ENCODE measurements at regions of chr7 and their contacts with region 1.

Region 1: DNA sequence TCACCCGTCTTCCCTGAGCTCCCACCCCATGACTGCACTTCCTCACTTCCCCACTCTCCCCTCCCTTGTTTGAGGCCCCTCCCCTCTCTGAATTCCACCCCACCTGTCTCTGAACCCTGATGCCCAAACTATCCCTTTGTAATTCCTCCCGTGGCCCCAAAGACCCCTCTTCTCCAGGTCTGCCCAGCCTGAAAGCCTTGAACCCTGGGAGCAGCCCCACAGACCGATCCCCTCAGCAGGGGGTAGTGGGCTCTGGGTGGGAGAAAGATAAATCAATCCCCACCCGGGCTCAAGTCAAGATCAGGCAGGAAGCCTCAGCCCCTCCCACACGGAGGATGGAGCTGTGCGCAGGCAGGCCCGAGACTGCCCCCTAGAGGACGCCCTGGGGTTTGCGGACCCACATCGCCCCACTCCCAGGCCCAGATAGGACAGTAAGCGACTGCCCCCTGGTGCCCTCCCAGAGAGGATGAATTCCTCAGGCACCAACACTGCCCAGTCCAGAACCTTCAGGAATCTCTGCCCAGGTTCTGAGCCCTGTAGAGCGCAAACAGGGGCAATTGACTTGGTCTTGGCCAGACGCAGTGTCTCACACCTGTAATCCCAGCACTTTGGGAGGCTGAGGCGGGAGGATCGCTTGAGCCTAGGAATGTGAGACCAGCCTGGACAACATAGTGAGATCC is 11.7 kb downstream of the HSPB1 start:
- DNase-seq: peak; percentile 90 to 97 (median 93)
- ATAC-seq: peak; percentile 85
- H3K4me3 ChIP-seq: no peak overlapping the region
- H3K4me3 Mint-ChIP-seq: peak overlapping the region in 4 of 10 donors; percentile 33 to 70 (median 60)
- H3K27ac ChIP-seq: no peak overlapping the region
- H3K27ac Mint-ChIP-seq: peak overlapping the region in 3 of 9 donors; percentile 8 to 86 (median 64)
- H3K4me1 ChIP-seq: peaks cover 11 to 12% of the 10 kb centered on the region in 2 donors
- H3K4me1 Mint-ChIP-seq: peaks cover 13 to 27% (median 23%) of the 10 kb centered on the region in 7 donors
- H3K27me3 ChIP-seq: no peaks in the 10 kb centered on the region
- H3K27me3 Mint-ChIP-seq: no peaks in the 10 kb centered on the region

Region 2: GRCh38 chr7:75866489-75867389 is 447.4 kb before region 1 on chr7:
- CTCF ChIA-PET with region 1: interaction called, 4 read pairs
- POLR2A ChIA-PET with region 1: no interaction called
- intact Hi-C with region 1: loop called (anchors 1 to 5 kb)
- DNase-seq: peak; percentile 17 to 62 (median 37)
- ATAC-seq: peak; percentile 89
- H3K4me3 ChIP-seq: no peak overlapping the region
- H3K4me3 Mint-ChIP-seq: no peak overlapping the region
- H3K27ac ChIP-seq: no peak overlapping the region
- H3K27ac Mint-ChIP-seq: no peak overlapping the region
- H3K4me1 ChIP-seq: no peaks in the 10 kb centered on the region
- H3K4me1 Mint-ChIP-seq: peaks cover 0 to 13% (median 0%) of the 10 kb centered on the region in 7 donors
- H3K27me3 ChIP-seq: no peaks in the 10 kb centered on the region
- H3K27me3 Mint-ChIP-seq: peaks cover 5 to 8% (median 7%) of the 10 kb centered on the region in 5 donors

Region 3: GRCh38 chr7:76166404-76167255 is 147.6 kb before region 1 on chr7:
- CTCF ChIA-PET with region 1: interaction called, 3 read pairs
- POLR2A ChIA-PET with region 1: interaction called, 10 read pairs
- intact Hi-C with region 1: no loop called
- DNase-seq: peak; percentile 90 to 95 (median 94)
- ATAC-seq: peak; percentile 96
- H3K4me3 ChIP-seq: peak overlapping the region; percentile 96
- H3K4me3 Mint-ChIP-seq: peak overlapping the region; percentile 84 to 92 (median 90)
- H3K27ac ChIP-seq: peak overlapping the region; percentile 84
- H3K27ac Mint-ChIP-seq: peak overlapping the region; percentile 79 to 99 (median 97)
- H3K4me1 ChIP-seq: peaks cover 0 to 4% of the 10 kb centered on the region in 2 donors
- H3K4me1 Mint-ChIP-seq: peaks cover 0 to 14% (median 6%) of the 10 kb centered on the region in 7 donors
- H3K27me3 ChIP-seq: no peaks in the 10 kb centered on the region
- H3K27me3 Mint-ChIP-seq: no peaks in the 10 kb centered on the region

Region 4: GRCh38 chr7:76269895-76270294 is 44.3 kb before region 1 on chr7:
- CTCF ChIA-PET with region 1: no interaction called
- POLR2A ChIA-PET with region 1: no interaction called
- intact Hi-C with region 1: no loop called
- DNase-seq: no peak
- ATAC-seq: no peak
- H3K4me3 ChIP-seq: no peak overlapping the region
- H3K4me3 Mint-ChIP-seq: no peak overlapping the region
- H3K27ac ChIP-seq: no peak overlapping the region
- H3K27ac Mint-ChIP-seq: no peak overlapping the region
- H3K4me1 ChIP-seq: no peaks in the 10 kb centered on the region
- H3K4me1 Mint-ChIP-seq: peaks cover 0 to 25% (median 13%) of the 10 kb centered on the region in 7 donors
- H3K27me3 ChIP-seq: peaks cover 0 to 3% of the 10 kb centered on the region in 2 donors
- H3K27me3 Mint-ChIP-seq: peaks cover 5 to 39% (median 18%) of the 10 kb centered on the region in 5 donors

Region 5: GRCh38 chr7:76282344-76283253 is 31.6 kb before region 1 on chr7:
- CTCF ChIA-PET with region 1: interaction called, 5 read pairs
- POLR2A ChIA-PET with region 1: interaction called, 4 read pairs
- intact Hi-C with region 1: loop called in 1 of 2 experiments (anchors 5 kb)
- DNase-seq: peak in 1 of 9 donors; percentile 47
- ATAC-seq: peak; percentile 47
- H3K4me3 ChIP-seq: peak overlapping the region; percentile 10
- H3K4me3 Mint-ChIP-seq: peak overlapping the region; percentile 68 to 88 (median 82)
- H3K27ac ChIP-seq: no peak overlapping the region
- H3K27ac Mint-ChIP-seq: no peak overlapping the region
- H3K4me1 ChIP-seq: peaks cover 6 to 10% of the 10 kb centered on the region in 2 donors
- H3K4me1 Mint-ChIP-seq: peaks cover 6 to 16% (median 14%) of the 10 kb centered on the region in 7 donors
- H3K27me3 ChIP-seq: peaks cover 4 to 6% of the 10 kb centered on the region in 2 donors
- H3K27me3 Mint-ChIP-seq: peaks cover 28 to 57% (median 30%) of the 10 kb centered on the region in 5 donors

Region 6: GRCh38 chr7:76302347-76303201 is 11.6 kb before region 1 on chr7 and contains the start of gene HSPB1:
- CTCF ChIA-PET with region 1: interaction called, 10 read pairs
- POLR2A ChIA-PET with region 1: interaction called, 23 read pairs
- intact Hi-C with region 1: loop called (anchors 1 kb)
- DNase-seq: peak; percentile 31 to 54 (median 44)
- ATAC-seq: peak; percentile 65
- H3K4me3 ChIP-seq: peak within 1 kb of the TSS; percentile 81
- H3K4me3 Mint-ChIP-seq: peak within 1 kb of the TSS; percentile 87 to 96 (median 92)
- H3K27ac ChIP-seq: peak within 1 kb of the TSS; percentile 81
- H3K27ac Mint-ChIP-seq: peak within 1 kb of the TSS; percentile 76 to 95 (median 91)
- H3K4me1 ChIP-seq: peaks cover 0 to 5% of the 10 kb centered on the region in 2 donors
- H3K4me1 Mint-ChIP-seq: peaks cover 6 to 22% (median 17%) of the 10 kb centered on the region in 7 donors
- H3K27me3 ChIP-seq: no peaks in the 10 kb centered on the region
- H3K27me3 Mint-ChIP-seq: peaks cover 0 to 20% (median 0%) of the 10 kb centered on the region in 5 donors
- total RNA-seq, gene HSPB1: 26.3 to 47.2 (median 40.5) TPM

Region 7: DNA sequence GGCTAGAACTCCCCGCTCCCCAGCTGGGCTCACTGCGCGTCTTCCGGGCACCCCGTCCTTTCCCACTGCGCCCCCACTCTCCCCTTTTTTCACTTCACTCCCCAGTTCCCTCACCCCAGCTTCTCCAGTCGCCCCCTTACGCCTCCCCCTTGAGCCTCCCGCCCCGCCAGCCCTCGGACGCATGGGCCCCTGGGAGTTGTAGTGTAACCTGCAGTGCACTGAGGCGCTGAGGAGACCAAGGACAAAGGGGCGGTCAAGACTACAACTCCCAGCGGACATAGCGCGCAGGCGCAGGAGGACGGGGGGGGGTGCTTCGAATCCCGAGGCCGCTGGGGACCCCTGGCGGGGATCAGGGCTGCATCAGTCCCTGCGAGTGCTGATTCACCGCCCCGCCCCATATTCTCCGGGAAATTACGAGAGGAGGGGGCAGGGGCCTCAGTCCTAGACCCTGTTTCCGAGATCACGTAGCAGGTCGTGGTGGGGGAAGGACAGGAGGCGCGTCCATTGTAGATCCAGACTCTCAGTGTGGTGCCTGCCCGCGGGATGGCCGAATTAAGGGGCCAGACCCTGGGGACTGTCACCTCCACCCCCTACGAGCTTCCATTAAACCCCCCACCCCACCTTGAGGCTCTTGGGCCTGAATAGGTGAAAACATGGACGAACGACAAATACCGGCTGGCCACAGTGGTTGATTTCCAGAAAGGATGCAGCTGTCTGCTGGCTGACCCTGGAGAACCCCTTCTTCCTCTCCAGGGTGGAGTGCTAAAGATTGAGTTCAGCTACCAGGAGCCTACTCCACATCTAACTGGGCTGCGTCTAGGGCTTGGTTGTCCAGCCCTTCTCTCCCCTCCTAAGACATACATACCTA is 45.2 kb after region 1 on chr7:
- CTCF ChIA-PET with region 1: interaction called, 15 read pairs
- POLR2A ChIA-PET with region 1: interaction called, 57 read pairs
- intact Hi-C with region 1: loop called (anchors 1 kb)
- DNase-seq: peak; percentile 87 to 96 (median 95)
- ATAC-seq: peak; percentile 94
- H3K4me3 ChIP-seq: peak overlapping the region; percentile 72
- H3K4me3 Mint-ChIP-seq: peak overlapping the region; percentile 84 to 99 (median 95)
- H3K27ac ChIP-seq: peak overlapping the region; percentile 92
- H3K27ac Mint-ChIP-seq: peak overlapping the region; percentile 66 to 99 (median 93)
- H3K4me1 ChIP-seq: peaks cover 4 to 31% of the 10 kb centered on the region in 2 donors
- H3K4me1 Mint-ChIP-seq: peaks cover 28 to 46% (median 43%) of the 10 kb centered on the region in 7 donors
- H3K27me3 ChIP-seq: no peaks in the 10 kb centered on the region
- H3K27me3 Mint-ChIP-seq: no peaks in the 10 kb centered on the region

Region 8: GRCh38 chr7:76424721-76425511 is 110.7 kb after region 1 on chr7 and contains the start of gene ZP3:
- CTCF ChIA-PET with region 1: no interaction called
- POLR2A ChIA-PET with region 1: no interaction called
- intact Hi-C with region 1: no loop called
- DNase-seq: no peak
- ATAC-seq: no peak
- H3K4me3 ChIP-seq: no peak within 1 kb of the TSS
- H3K4me3 Mint-ChIP-seq: peak within 1 kb of the TSS in 1 of 10 donors; percentile 76
- H3K27ac ChIP-seq: no peak within 1 kb of the TSS
- H3K27ac Mint-ChIP-seq: peak within 1 kb of the TSS in 1 of 9 donors; percentile 93
- H3K4me1 ChIP-seq: no peaks in the 10 kb centered on the region
- H3K4me1 Mint-ChIP-seq: peaks cover 0 to 28% (median 0%) of the 10 kb centered on the region in 7 donors
- H3K27me3 ChIP-seq: no peaks in the 10 kb centered on the region
- H3K27me3 Mint-ChIP-seq: peaks cover 0 to 25% (median 3%) of the 10 kb centered on the region in 5 donors
- total RNA-seq, gene ZP3: 2.6 to 16.7 (median 5.3) TPM

Region 9: DNA sequence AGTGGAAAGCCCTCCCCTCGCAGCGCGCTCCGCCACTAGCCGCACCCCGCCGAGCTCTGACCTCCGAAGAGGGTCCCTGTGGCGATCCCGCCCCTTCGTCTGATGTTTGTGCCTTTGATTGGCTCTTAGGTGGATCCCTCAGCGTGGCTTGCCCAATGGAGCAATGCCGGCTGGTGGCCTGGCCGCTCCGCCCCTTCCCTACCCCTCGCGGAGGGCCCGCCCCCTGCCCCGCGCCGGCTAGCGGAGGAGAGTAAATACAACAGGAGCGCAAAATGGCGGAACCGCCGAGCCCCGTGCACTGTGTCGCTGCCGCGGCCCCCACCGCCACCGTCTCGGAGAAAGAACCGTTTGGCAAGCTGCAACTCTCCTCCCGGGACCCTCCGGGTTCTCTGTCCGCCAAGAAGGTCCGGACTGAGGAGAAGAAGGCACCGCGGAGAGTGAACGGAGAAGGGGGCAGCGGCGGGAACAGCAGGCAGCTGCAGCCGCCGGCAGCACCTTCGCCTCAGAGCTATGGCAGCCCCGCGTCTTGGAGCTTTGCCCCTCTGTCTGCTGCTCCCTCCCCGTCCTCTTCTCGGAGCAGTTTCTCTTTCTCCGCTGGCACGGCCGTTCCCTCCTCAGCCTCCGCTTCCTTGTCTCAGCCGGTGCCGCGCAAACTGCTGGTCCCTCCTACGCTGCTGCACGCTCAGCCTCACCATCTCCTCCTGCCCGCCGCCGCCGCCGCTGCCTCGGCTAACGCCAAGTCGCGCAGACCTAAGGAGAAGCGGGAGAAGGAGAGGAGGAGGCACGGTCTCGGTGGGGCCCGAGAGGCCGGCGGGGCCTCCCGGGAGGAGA is 1382.2 kb after region 1 on chr7 and contains the start of gene RSBN1L:
- CTCF ChIA-PET with region 1: no interaction called
- POLR2A ChIA-PET with region 1: no interaction called
- intact Hi-C with region 1: loop called in 1 of 2 experiments (anchors 5 kb)
- DNase-seq: peak; percentile 96 to 98 (median 98)
- ATAC-seq: peak; percentile 98
- H3K4me3 ChIP-seq: peak within 1 kb of the TSS; percentile 99
- H3K4me3 Mint-ChIP-seq: peak within 1 kb of the TSS; percentile 89 to 100 (median 99)
- H3K27ac ChIP-seq: peak within 1 kb of the TSS; percentile 94
- H3K27ac Mint-ChIP-seq: peak within 1 kb of the TSS; percentile 94 to 98 (median 96)
- H3K4me1 ChIP-seq: peaks cover 13 to 15% of the 10 kb centered on the region in 2 donors
- H3K4me1 Mint-ChIP-seq: peaks cover 22 to 81% (median 65%) of the 10 kb centered on the region in 7 donors
- H3K27me3 ChIP-seq: no peaks in the 10 kb centered on the region
- H3K27me3 Mint-ChIP-seq: no peaks in the 10 kb centered on the region
- total RNA-seq, gene RSBN1L: 19.7 to 41.7 (median 30.8) TPM

Measured in naive thymus-derived CD4-positive, alpha-beta T cell (primary cell).